Heart right ventricle (tissue), 16 donors: ENCODE measurements at regions of chr14 and their contacts with region 1.

Region 1: GRCh38 chr14:69153131-69153872 is 383 bp upstream of the DCAF5 start:
- DNase-seq: peak; percentile 93 to 94
- ATAC-seq: peak; percentile 92 to 95 (median 93)
- H3K4me3 ChIP-seq: peak overlapping the region; percentile 79 to 98 (median 90)
- H3K27ac ChIP-seq: peak overlapping the region; percentile 76 to 98 (median 94)
- H3K4me1 ChIP-seq: peaks cover 3 to 44% (median 33%) of the 10 kb centered on the region in 9 donors
- H3K27me3 ChIP-seq: no peaks in the 10 kb centered on the region
- CTCF ChIP-seq: peak in 1 of 9 donors; percentile 3

Region 2: DNA sequence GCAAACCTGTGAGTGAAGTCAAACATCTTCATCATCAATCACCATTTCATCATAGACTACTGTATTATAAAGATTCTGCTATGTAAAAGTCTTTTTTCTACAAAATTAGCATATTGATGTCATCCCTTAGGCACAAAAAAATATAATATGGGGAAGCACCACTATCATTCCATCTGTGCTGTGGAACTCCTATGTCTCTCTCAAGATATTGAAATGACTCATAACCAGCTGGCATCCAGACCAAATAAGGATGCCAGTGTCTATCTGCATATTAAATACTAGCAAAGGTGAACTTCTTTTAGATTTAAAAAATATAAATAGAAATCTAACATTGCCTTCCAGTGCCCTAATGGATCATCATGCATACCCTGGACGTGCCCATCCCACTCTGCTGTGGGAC is 17.5 kb after region 1 on chr14:
- intact Hi-C with region 1: loop called in 1 of 10 experiments (anchors 1 kb)
- DNase-seq: no peak
- ATAC-seq: no peak
- H3K4me3 ChIP-seq: no peak overlapping the region
- H3K27ac ChIP-seq: no peak overlapping the region
- H3K4me1 ChIP-seq: no peaks in the 10 kb centered on the region
- H3K27me3 ChIP-seq: peaks cover 0 to 6% (median 0%) of the 10 kb centered on the region in 7 donors
- CTCF ChIP-seq: no peak

Region 3: DNA sequence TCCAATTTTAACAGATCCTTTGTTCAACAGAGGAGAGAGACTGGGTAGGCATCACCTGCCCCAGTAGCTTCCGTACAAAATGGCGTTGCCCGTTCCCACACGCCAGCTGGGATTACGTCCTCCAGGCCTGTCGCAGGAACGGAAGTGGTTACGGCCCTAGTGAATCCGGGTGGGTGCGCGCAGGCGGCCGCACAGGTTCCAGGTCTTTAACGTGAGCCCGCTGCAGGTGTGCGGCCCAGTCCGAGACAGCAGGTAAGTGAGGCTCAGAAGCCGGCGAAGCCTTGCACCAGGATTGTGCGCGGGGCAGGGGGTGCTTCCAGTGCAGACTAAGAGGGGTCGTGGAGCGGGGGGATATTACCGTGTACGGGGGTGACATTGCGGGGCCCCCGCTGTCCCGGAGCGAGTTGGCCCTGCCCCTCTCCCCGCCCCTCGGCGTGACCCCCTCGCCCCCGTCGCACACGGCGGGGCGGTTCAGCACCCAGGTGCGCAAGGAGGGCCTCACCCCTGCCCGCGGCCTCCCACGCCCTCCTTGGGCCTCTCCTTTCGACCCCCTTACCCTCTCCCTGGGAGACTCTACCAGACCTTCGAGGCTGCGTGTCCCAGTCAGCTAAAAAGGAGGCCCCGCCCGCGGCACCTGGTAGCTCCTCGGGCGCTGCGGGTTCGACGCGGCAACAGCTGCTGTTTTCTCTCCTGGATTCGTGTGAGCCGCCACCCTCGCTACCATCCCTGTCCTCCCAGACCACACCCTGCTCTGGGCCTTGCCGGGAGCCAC is 38.2 kb after region 1 on chr14 and contains the start of gene EXD2:
- intact Hi-C with region 1: loop called in 5 of 10 experiments (anchors 1 to 5 kb)
- DNase-seq: peak; percentile 84 to 87
- ATAC-seq: peak; percentile 98 to 99 (median 99)
- H3K4me3 ChIP-seq: peak within 1 kb of the TSS; percentile 78 to 99 (median 96)
- H3K27ac ChIP-seq: peak within 1 kb of the TSS; percentile 13 to 87 (median 82)
- H3K4me1 ChIP-seq: peaks cover 0 to 11% (median 9%) of the 10 kb centered on the region in 9 donors
- H3K27me3 ChIP-seq: no peaks in the 10 kb centered on the region
- CTCF ChIP-seq: no peak
- total RNA-seq, gene EXD2: 13.9 to 22.4 (median 16.3) TPM

Region 4: GRCh38 chr14:69226178-69226577 is 72.9 kb after region 1 on chr14:
- intact Hi-C with region 1: loop called in 2 of 10 experiments (anchors 5 to 10 kb)
- DNase-seq: peak in 1 of 2 donors; percentile 31
- ATAC-seq: peak; percentile 62 to 88 (median 82)
- H3K4me3 ChIP-seq: no peak overlapping the region
- H3K27ac ChIP-seq: peak overlapping the region in 9 of 10 donors; percentile 43 to 77 (median 69)
- H3K4me1 ChIP-seq: peaks cover 0 to 27% (median 17%) of the 10 kb centered on the region in 9 donors
- H3K27me3 ChIP-seq: no peaks in the 10 kb centered on the region
- CTCF ChIP-seq: no peak

Region 5: GRCh38 chr14:69363055-69363454 is 209.8 kb after region 1 on chr14:
- intact Hi-C with region 1: loop called in 2 of 10 experiments (anchors 10 kb)
- DNase-seq: peak; percentile 25 to 52
- ATAC-seq: peak; percentile 72 to 89 (median 85)
- H3K4me3 ChIP-seq: no peak overlapping the region
- H3K27ac ChIP-seq: no peak overlapping the region
- H3K4me1 ChIP-seq: peaks cover 0 to 8% (median 0%) of the 10 kb centered on the region in 9 donors
- H3K27me3 ChIP-seq: no peaks in the 10 kb centered on the region
- CTCF ChIP-seq: peak; percentile 24 to 72 (median 59)